Left lung (tissue), 14 donors: ENCODE measurements at regions of chr2 and their contacts with region 1.

Region 1: GRCh38 chr2:113138428-113139322 is 11.3 kb downstream of the IL1RN start:
- DNase-seq: peak in 2 of 4 donors; percentile 62 to 81
- ATAC-seq: peak; percentile 92
- H3K4me3 ChIP-seq: no peak overlapping the region
- H3K27ac ChIP-seq: no peak overlapping the region
- H3K4me1 ChIP-seq: peaks cover 0 to 6% of the 10 kb centered on the region in 2 donors
- H3K27me3 ChIP-seq: no peaks in the 10 kb centered on the region
- CTCF ChIP-seq: peak; percentile 83 to 88

Region 2: GRCh38 chr2:113198790-113199612 is 60.3 kb after region 1 on chr2:
- intact Hi-C with region 1: loop called in 1 of 2 experiments (anchors 5 kb)
- DNase-seq: peak; percentile 70 to 97 (median 78)
- ATAC-seq: peak; percentile 96
- H3K4me3 ChIP-seq: peak overlapping the region; percentile 72 to 92
- H3K27ac ChIP-seq: peak overlapping the region; percentile 72 to 84
- H3K4me1 ChIP-seq: peaks cover 0 to 14% of the 10 kb centered on the region in 2 donors
- H3K27me3 ChIP-seq: no peaks in the 10 kb centered on the region
- CTCF ChIP-seq: peak; percentile 94 to 97

Region 3: GRCh38 chr2:113370478-113371091 is 231.9 kb after region 1 on chr2:
- intact Hi-C with region 1: loop called in 1 of 2 experiments (anchors 10 kb)
- DNase-seq: peak in 3 of 4 donors; percentile 56 to 78 (median 67)
- ATAC-seq: peak; percentile 97
- H3K4me3 ChIP-seq: no peak overlapping the region
- H3K27ac ChIP-seq: no peak overlapping the region
- H3K4me1 ChIP-seq: no peaks in the 10 kb centered on the region
- H3K27me3 ChIP-seq: no peaks in the 10 kb centered on the region
- CTCF ChIP-seq: peak; percentile 43 to 58